Psoas muscle (tissue), 8 donors: ENCODE measurements at regions of chr12 and their contacts with region 1.

Region 1: GRCh38 chr12:32467959-32468863 is 68.9 kb downstream of the FGD4 start:
- DNase-seq: no peak
- ATAC-seq: peak; percentile 65 to 94 (median 86)
- H3K4me3 ChIP-seq: peak overlapping the region; percentile 36
- H3K27ac ChIP-seq: peak overlapping the region; percentile 87
- H3K4me1 ChIP-seq: peaks cover 10% of the 10 kb centered on the region
- H3K27me3 ChIP-seq: no peaks in the 10 kb centered on the region
- CTCF ChIP-seq: no peak

Region 2: GRCh38 chr12:32435921-32436705 is 32.1 kb before region 1 on chr12:
- intact Hi-C with region 1: no loop called
- DNase-seq: no peak
- ATAC-seq: no peak
- H3K4me3 ChIP-seq: no peak overlapping the region
- H3K27ac ChIP-seq: no peak overlapping the region
- H3K4me1 ChIP-seq: peaks cover 4% of the 10 kb centered on the region
- H3K27me3 ChIP-seq: no peaks in the 10 kb centered on the region
- CTCF ChIP-seq: no peak

Region 3: DNA sequence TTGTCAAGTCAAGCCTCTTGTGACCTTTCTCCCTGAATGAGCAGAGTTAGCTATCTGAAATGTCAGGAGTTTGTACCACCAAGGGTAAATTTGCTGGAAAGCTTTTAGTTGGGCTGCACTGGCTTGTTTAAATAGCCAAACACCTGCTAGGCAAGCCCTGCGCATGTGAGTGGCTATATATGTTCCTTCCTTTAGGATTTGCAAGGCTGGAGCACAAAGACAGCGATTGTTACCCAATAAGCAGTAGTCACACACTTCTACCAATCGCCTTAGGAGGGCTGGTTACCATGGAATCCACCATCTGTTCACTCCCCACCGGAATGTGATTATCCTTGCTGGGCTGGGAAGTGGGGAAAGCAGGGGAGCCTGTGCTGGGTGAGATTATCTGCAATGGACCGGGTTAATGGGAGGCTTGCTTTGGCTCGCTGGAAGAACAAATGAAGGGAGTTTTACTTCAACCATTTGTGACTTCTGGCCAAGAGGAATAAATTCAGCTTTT is 33.7 kb after region 1 on chr12:
- intact Hi-C with region 1: loop called in 1 of 2 experiments (anchors 2 kb)
- DNase-seq: peak; percentile 20 to 53
- ATAC-seq: peak; percentile 73 to 82 (median 76)
- H3K4me3 ChIP-seq: peak overlapping the region; percentile 65
- H3K27ac ChIP-seq: peak overlapping the region; percentile 87
- H3K4me1 ChIP-seq: peaks cover 56% of the 10 kb centered on the region
- H3K27me3 ChIP-seq: no peaks in the 10 kb centered on the region
- CTCF ChIP-seq: no peak

Region 4: DNA sequence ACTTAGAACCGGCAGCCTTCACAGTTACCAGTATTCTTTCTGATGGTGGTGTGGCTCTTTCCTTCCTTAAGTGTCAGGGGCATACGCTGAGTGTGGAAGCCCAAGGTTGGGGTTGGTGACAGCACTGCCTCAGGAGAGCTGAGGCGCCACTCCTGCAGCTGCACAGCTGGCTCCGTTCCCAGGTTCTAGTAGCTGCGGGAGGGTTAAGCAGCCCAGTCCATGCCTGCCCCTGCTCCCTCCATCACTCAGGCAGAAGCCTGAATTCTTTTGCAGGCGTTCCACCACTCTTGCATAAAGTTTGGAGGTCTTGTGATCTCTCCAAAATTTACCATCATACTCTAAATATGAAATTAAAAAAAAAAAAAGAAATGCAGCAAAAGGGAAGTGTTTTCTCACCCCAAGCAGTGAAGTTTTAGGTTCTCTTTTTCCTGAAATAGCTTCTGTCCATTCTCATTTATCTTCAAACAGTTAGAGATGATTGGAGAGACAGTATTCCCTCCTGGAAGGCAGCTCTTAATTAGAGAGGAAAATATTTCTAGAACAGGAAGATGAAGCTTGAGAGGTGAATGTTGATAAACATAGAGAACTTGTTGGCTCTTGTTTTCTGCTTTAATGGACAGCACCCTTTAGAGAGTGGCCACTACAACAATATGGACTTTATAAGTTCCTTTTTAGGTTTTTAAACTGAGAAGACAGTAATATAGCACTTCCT is 67.2 kb after region 1 on chr12:
- intact Hi-C with region 1: loop called in 1 of 2 experiments (anchors 5 kb)
- DNase-seq: peak; percentile 79 to 91
- ATAC-seq: peak; percentile 88 to 94 (median 88)
- H3K4me3 ChIP-seq: peak overlapping the region; percentile 68
- H3K27ac ChIP-seq: peak overlapping the region; percentile 90
- H3K4me1 ChIP-seq: peaks cover 63% of the 10 kb centered on the region
- H3K27me3 ChIP-seq: no peaks in the 10 kb centered on the region
- CTCF ChIP-seq: no peak